Breast epithelium (tissue), 4 donors: ENCODE measurements at regions of chrX and their contacts with region 1.

Region 1: DNA sequence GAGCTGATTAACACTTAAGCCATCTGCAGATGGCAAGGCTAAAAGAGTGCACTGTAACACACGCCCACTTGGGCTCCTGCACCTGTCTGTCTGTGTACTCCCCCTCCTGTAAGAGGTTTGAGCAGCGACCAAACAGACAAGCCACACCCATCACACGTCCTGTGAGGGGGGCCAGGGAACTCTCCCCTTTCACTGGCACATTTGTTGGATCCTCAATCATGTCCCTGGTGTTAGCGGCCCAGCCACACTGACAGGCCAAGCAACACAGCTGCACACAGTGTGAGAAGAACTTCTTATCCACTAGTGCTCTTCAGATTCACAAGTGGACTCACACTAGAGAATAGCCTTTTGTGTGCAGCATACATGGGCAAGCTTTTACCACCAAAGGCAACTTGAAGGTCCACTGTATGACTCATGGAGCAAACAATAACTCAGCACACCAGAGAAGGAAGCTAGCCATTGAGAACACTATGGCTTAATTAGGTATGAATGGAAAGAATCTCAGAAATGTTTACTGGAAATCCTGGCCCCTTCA is 29.1 kb upstream of the UTP14A start:
- DNase-seq: no peak
- H3K4me3 ChIP-seq: no peak overlapping the region
- H3K27ac ChIP-seq: no peak overlapping the region
- H3K4me1 ChIP-seq: no peaks in the 10 kb centered on the region
- H3K27me3 ChIP-seq: peaks cover 0 to 15% of the 10 kb centered on the region in 2 donors
- CTCF ChIP-seq: no peak
- POLR2A ChIP-seq: no peak

Region 2: GRCh38 chrX:129529685-129530281 is 347.1 kb before region 1 on chrX:
- intact Hi-C with region 1: loop called (anchors 5 kb)
- DNase-seq: no peak
- H3K4me3 ChIP-seq: no peak overlapping the region
- H3K27ac ChIP-seq: no peak overlapping the region
- H3K4me1 ChIP-seq: no peaks in the 10 kb centered on the region
- H3K27me3 ChIP-seq: peaks cover 0 to 10% of the 10 kb centered on the region in 2 donors
- CTCF ChIP-seq: no peak
- POLR2A ChIP-seq: no peak

Region 3: GRCh38 chrX:129808829-129809796 is 67.7 kb before region 1 on chrX:
- intact Hi-C with region 1: no loop called
- DNase-seq: no peak
- H3K4me3 ChIP-seq: no peak overlapping the region
- H3K27ac ChIP-seq: peak overlapping the region in 1 of 2 donors; percentile 66
- H3K4me1 ChIP-seq: no peaks in the 10 kb centered on the region
- H3K27me3 ChIP-seq: no peaks in the 10 kb centered on the region
- CTCF ChIP-seq: no peak
- POLR2A ChIP-seq: no peak

Region 4: GRCh38 chrX:129843459-129844306 is 33.2 kb before region 1 on chrX and contains the start of gene ZDHHC9:
- intact Hi-C with region 1: no loop called
- DNase-seq: peak; percentile 69 to 80
- H3K4me3 ChIP-seq: peak within 1 kb of the TSS; percentile 68 to 72 (median 71)
- H3K27ac ChIP-seq: peak within 1 kb of the TSS; percentile 81 to 82
- H3K4me1 ChIP-seq: no peaks in the 10 kb centered on the region
- H3K27me3 ChIP-seq: peaks cover 0 to 18% of the 10 kb centered on the region in 2 donors
- CTCF ChIP-seq: peak in 1 of 3 donors; percentile 13
- POLR2A ChIP-seq: no peak
- total RNA-seq, gene ZDHHC9: 21.8 to 36.2 (median 34.4) TPM

Region 5: GRCh38 chrX:129900054-129900453 is 23.2 kb after region 1 on chrX:
- intact Hi-C with region 1: no loop called
- DNase-seq: no peak
- H3K4me3 ChIP-seq: no peak overlapping the region
- H3K27ac ChIP-seq: no peak overlapping the region
- H3K4me1 ChIP-seq: no peaks in the 10 kb centered on the region
- H3K27me3 ChIP-seq: peaks cover 0 to 23% of the 10 kb centered on the region in 2 donors
- CTCF ChIP-seq: no peak
- POLR2A ChIP-seq: no peak